AG04449 (cell line): ENCODE measurements at regions of chr15 and their contacts with region 1.

Region 1: GRCh38 chr15:89985111-89985510 is 16.0 kb upstream of the ZNF710 start:
- DNase-seq: no peak
- H3K4me3 ChIP-seq: no peak overlapping the region
- CTCF ChIP-seq: no peak

Region 2: GRCh38 chr15:89358755-89359439 is 626.2 kb before region 1 on chr15:
- CTCF ChIA-PET with region 1: no interaction called
- POLR2A ChIA-PET with region 1: no interaction called
- DNase-seq: no peak
- H3K4me3 ChIP-seq: peak overlapping the region; percentile 64
- CTCF ChIP-seq: peak; percentile 96

Region 3: GRCh38 chr15:89462331-89462912 is 522.7 kb before region 1 on chr15:
- CTCF ChIA-PET with region 1: no interaction called
- POLR2A ChIA-PET with region 1: no interaction called
- DNase-seq: no peak
- H3K4me3 ChIP-seq: no peak overlapping the region
- CTCF ChIP-seq: no peak

Region 4: DNA sequence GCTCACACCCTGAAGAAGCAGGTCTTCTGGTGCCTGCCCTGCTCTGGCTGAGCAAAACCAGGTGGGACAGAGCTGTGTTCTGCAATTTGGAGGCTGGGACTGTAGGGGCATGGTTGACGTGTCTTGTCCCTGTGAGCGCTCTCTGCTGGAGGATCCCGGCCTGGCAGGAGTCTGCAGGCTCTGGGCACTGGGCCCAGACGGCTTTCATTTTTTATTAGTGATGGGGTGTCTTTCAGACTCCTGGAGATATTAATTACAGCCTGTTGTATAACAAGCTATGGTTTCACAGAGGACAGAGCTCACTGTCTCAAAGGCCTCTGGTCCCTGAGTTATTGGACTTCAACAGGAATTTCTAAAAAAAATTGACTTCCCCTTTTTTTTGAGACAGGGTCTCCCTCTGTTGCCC is 13.5 kb before region 1 on chr15:
- CTCF ChIA-PET with region 1: interaction called, 16 read pairs
- POLR2A ChIA-PET with region 1: no interaction called
- DNase-seq: peak; percentile 1
- H3K4me3 ChIP-seq: no peak overlapping the region
- CTCF ChIP-seq: peak; percentile 71

Region 5: GRCh38 chr15:90191794-90192509 is 206.8 kb after region 1 on chr15:
- CTCF ChIA-PET with region 1: no interaction called
- POLR2A ChIA-PET with region 1: no interaction called
- DNase-seq: no peak
- H3K4me3 ChIP-seq: no peak overlapping the region
- CTCF ChIP-seq: no peak